Right lobe of liver (tissue), 6 donors: ENCODE measurements at regions of chr2 and their contacts with region 1.

Region 1: GRCh38 chr2:56749152-56749752 is 565.5 kb downstream of the CCDC85A start:
- DNase-seq: no peak
- ATAC-seq: peak; percentile 49 to 84 (median 74)
- H3K4me3 ChIP-seq: no peak overlapping the region
- H3K27ac ChIP-seq: no peak overlapping the region
- H3K4me1 ChIP-seq: no peaks in the 10 kb centered on the region
- H3K27me3 ChIP-seq: no peaks in the 10 kb centered on the region
- CTCF ChIP-seq: peak; percentile 41 to 58 (median 48)
- POLR2A ChIP-seq: no peak

Region 2: GRCh38 chr2:56183643-56184499 is 565.4 kb before region 1 on chr2 and contains the start of gene CCDC85A:
- intact Hi-C with region 1: loop called (anchors 5 to 10 kb)
- DNase-seq: peak; percentile 85 to 88 (median 85)
- ATAC-seq: peak; percentile 95 to 97 (median 96)
- H3K4me3 ChIP-seq: peak within 1 kb of the TSS; percentile 50 to 62 (median 54)
- H3K27ac ChIP-seq: no peak within 1 kb of the TSS
- H3K4me1 ChIP-seq: peaks cover 0 to 11% (median 0%) of the 10 kb centered on the region in 4 donors
- H3K27me3 ChIP-seq: no peaks in the 10 kb centered on the region
- CTCF ChIP-seq: peak; percentile 83 to 94 (median 92)
- POLR2A ChIP-seq: no peak
- total RNA-seq, gene CCDC85A: 0.07 to 0.31 (median 0.14) TPM in 5 of 6 experiments, not detected in the other

Region 3: DNA sequence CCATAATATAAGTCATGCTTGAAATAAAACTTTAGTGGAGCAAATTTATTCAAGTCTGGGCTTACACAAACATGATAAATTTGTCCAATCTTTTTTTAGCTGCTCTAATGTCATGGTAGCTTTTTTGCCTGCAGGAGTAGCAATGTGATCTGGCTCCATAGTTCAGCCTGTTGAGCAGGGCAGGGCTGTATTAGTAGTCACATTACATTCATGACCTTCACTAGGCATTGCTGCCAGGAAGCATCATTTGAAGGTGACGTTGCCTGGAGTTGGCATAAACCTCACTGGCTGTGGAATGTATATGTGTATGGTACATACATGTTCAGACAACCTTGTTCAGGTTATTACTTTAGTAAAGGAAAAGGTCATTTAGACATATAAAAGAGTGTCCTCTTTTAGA is 488.8 kb before region 1 on chr2:
- intact Hi-C with region 1: no loop called
- DNase-seq: no peak
- ATAC-seq: no peak
- H3K4me3 ChIP-seq: no peak overlapping the region
- H3K27ac ChIP-seq: no peak overlapping the region
- H3K4me1 ChIP-seq: no peaks in the 10 kb centered on the region
- H3K27me3 ChIP-seq: no peaks in the 10 kb centered on the region
- CTCF ChIP-seq: no peak
- POLR2A ChIP-seq: no peak